ENCODE measurements at regions of chrX and their contacts with region 1.

Region 1: DNA sequence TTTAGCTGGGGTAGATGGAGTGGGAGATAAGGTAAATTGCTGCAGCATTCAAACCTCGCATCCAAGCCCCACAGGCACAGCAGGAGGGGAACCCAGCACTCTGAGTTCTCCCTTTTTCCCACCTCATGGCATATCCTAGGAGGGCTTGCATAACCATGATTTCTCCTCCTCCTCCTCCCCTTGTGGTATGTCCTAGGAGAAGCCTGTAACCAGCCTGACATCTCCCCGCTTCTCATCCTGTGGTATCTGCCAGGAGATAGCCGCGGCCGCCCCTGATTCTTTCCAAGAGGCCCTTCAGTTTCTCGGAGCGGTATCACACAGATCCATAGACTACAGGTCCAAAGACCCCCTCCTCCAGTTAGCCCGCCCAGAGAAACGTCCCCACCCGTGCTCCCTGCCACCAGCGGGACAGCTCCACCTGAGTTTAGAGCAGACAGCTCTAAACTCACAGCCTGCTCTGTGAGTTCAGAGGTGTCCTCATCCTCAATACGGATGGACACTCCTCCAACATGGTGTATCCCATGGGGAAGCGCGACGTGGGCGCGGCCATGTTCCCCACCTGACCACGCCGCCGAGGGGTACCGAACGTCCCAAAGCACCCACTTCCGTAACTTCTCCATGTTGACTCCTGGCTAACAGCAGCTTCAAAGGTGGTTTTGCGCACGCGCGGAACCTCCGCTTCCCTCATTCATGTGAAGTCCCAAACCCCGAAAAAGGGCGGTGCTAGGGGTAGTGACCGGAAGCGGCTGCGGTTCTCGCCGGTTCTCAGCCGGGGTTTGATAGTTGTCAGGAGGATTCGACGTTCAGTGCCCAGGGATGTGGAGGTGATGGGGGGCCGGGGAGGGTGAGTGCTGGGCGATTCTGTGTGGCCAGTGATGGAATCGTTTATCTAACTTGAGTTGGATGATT is at the start of gene ZNF81:
- DNase-seq: peak; percentile 94 to 97 (median 96)
- ATAC-seq: peak; percentile 99 to 100 (median 100)
- H3K4me3 ChIP-seq: peak within 1 kb of the TSS; percentile 26 to 74 (median 59)
- H3K27ac ChIP-seq: peak within 1 kb of the TSS in 11 of 12 donors; percentile 59 to 83 (median 74)
- H3K4me1 ChIP-seq: peaks cover 0 to 15% (median 0%) of the 10 kb centered on the region in 12 donors
- H3K27me3 ChIP-seq: peaks cover 0 to 4% (median 0%) of the 10 kb centered on the region in 9 donors
- CTCF ChIP-seq: no peak
- POLR2A ChIP-seq: peak in 1 of 2 donors; percentile 43
- total RNA-seq, gene ZNF81: 2.9 to 8.9 (median 6.9) TPM

Region 2: DNA sequence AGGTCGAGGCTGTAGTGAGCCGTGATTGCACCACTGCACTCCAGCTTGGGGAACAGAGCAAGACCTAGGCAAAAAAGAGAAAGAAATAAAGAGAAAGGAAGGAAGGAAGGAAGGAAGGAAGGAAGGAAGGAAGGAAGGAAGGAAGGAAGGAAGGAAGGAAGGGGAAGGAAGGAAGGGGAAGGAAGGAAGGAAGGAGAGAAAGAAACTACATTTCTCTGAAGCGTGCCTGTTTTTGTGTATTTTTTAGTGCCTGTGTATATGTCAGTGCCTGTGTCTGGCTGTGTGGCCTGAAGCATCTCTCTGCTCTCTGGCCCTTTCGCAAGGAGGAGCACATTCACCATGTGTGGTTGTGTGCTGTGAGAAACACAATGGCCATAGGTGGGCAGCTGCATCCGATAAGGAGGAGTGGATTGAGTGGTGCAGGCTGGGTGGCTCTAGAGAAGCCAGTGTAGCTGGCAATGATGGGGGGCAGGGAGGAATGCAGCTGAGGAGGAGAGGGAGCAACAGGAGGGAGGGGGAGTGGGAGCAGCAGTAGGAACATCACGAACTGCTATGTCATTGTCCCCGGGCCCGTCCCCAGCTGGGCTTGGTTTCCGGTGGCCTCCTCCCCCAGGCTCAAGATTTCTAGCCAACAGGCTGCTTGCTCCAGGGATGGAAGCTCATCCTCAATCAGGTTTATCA is 228.1 kb before region 1 on chrX:
- intact Hi-C with region 1: no loop called
- DNase-seq: no peak
- ATAC-seq: no peak
- H3K4me3 ChIP-seq: no peak overlapping the region
- H3K27ac ChIP-seq: no peak overlapping the region
- H3K4me1 ChIP-seq: no peaks in the 10 kb centered on the region
- H3K27me3 ChIP-seq: no peaks in the 10 kb centered on the region
- CTCF ChIP-seq: no peak
- POLR2A ChIP-seq: no peak

Region 3: DNA sequence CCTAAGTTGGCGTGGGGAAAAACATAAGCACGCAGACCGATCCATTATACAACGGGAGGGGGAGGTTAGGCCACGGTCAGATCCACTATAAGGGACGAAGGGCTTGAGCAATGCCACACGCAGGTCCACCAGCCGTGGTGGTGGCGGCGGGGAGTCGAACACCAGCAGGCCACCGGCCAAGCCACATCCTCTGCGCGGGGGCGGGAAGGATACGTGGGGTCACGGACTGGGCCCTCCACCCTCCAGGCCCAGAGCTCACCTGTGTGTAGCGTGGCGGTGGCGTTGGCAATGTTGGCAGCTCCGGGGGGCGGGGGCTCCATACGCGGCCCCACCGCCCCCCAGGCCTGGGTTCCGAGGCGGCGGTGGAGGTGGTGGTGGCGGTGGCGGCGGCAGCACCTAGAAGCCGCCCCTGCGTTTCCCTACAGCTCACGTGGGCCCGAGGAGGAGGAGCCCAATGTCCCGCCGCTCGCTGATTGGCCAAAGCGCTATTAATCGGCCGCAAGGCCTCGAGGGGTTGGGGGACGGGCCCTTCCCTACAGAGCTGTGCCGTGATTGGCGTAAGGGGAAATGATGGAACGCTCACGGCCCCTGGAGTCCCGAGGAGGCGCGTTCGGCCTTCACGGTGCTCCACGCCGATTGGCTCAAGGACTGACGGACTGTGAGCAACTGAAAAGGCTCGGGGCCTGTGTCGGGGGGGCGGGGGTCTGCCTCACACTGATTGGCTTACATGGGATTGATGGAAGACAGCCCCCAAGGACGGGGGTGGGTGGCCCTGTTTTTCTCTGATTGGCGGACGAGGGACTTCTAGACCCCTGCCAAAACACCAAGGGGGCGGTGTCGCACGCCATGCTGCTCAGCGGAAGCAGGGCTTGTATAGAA is 186.0 kb before region 1 on chrX and contains the start of gene ELK1:
- intact Hi-C with region 1: loop called in 2 of 10 experiments (anchors 5 to 10 kb)
- DNase-seq: peak; percentile 93 to 97 (median 95)
- ATAC-seq: peak; percentile 94 to 98 (median 97)
- H3K4me3 ChIP-seq: peak within 1 kb of the TSS; percentile 39 to 90 (median 70)
- H3K27ac ChIP-seq: peak within 1 kb of the TSS; percentile 47 to 93 (median 82)
- H3K4me1 ChIP-seq: peaks cover 0 to 17% (median 6%) of the 10 kb centered on the region in 12 donors
- H3K27me3 ChIP-seq: peaks cover 0 to 4% (median 0%) of the 10 kb centered on the region in 9 donors
- CTCF ChIP-seq: peak in 2 of 12 donors; percentile 18 to 30
- POLR2A ChIP-seq: peak in 1 of 2 donors; percentile 39
- total RNA-seq, gene ELK1: 23.7 to 35.3 (median 29.7) TPM

Region 4: GRCh38 chrX:47658684-47659515 is 177.5 kb before region 1 on chrX and contains the start of gene UXT:
- intact Hi-C with region 1: loop called in 2 of 10 experiments (anchors 5 to 10 kb)
- DNase-seq: peak; percentile 90 to 93 (median 93)
- ATAC-seq: peak; percentile 93 to 95 (median 94)
- H3K4me3 ChIP-seq: peak within 1 kb of the TSS; percentile 24 to 80 (median 66)
- H3K27ac ChIP-seq: peak within 1 kb of the TSS; percentile 88 to 97 (median 90)
- H3K4me1 ChIP-seq: peaks cover 0 to 13% (median 3%) of the 10 kb centered on the region in 12 donors
- H3K27me3 ChIP-seq: no peaks in the 10 kb centered on the region
- CTCF ChIP-seq: no peak
- POLR2A ChIP-seq: peak in 1 of 2 donors; percentile 69
- total RNA-seq, gene UXT: 74.4 to 132 (median 96.5) TPM